ENCODE measurements at regions of chr18 and their contacts with region 1.

Region 1: GRCh38 chr18:58847383-58848071 is 17.1 kb upstream of the ZNF532 start:
- DNase-seq: peak; percentile 46
- ATAC-seq: peak; percentile 57 to 71

Region 2: GRCh38 chr18:58792086-58792485 is 55.4 kb before region 1 on chr18:
- intact Hi-C with region 1: loop called (anchors 5 to 10 kb)
- DNase-seq: no peak
- ATAC-seq: no peak

Region 3: GRCh38 chr18:58800582-58800981 is 46.9 kb before region 1 on chr18:
- intact Hi-C with region 1: loop called (anchors 5 to 10 kb)
- DNase-seq: no peak
- ATAC-seq: no peak

Region 4: GRCh38 chr18:59056706-59057492 is 209.4 kb after region 1 on chr18:
- intact Hi-C with region 1: loop called in 1 of 2 experiments (anchors 5 kb)
- DNase-seq: peak; percentile 77
- ATAC-seq: peak; percentile 56 to 73

Measured in left cardiac atrium (tissue), 4 donors.